Left ventricle myocardium inferior (tissue), 1 donor: ENCODE measurements at regions of chr1 and their contacts with region 1.

Region 1: GRCh38 chr1:214584805-214585766 is 17.9 kb upstream of the CENPF start:
- DNase-seq: no peak
- H3K4me3 ChIP-seq: no peak overlapping the region
- H3K27ac ChIP-seq: no peak overlapping the region
- H3K4me1 ChIP-seq: no peaks in the 10 kb centered on the region
- H3K27me3 ChIP-seq: no peaks in the 10 kb centered on the region
- CTCF ChIP-seq: peak; percentile 80

Region 2: DNA sequence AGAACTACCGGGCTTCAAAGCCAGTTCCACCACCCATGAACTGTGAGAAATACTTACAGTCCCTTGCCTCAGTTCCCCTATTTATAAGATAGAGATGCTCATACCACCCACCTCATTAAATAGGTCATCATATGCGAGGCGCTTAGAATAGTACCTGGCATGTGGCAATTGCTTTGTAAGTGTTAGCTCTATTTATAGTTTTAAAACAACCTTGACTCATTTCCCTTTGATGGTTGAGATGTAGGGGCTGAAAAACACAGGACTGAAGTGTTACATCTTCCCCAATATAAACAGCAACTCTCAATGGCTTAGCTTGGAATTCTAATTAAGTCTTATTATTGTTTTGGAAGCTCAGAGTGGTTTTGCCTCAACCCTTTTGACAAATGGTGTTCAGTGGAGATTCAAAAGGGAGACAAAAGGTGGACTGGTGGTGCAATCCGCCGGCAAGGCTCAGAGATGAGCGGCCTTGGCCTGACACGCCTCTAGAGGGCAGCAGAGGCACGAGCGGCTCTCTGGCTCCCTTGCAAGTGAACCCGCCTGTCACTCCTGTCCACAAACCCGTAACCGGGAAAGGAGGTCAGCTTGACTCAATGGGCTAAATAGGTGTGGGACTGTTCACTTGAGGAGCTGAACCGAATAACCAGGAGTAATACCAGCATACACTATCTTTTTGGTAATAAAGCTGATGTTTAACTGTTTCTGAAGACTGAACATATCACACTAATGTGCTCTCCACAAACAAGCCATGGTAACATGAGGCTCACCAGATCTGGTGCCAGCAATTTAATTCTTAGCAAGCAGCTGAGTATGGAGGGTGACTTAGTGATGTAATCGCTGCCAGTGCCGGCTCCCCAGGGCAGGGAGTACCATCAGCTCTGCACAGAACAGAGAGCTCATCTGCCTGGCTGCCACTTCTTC is 323.6 kb before region 1 on chr1:
- intact Hi-C with region 1: loop called (anchors 10 kb)
- DNase-seq: peak; percentile 85
- H3K4me3 ChIP-seq: peak overlapping the region; percentile 15
- H3K27ac ChIP-seq: peak overlapping the region; percentile 80
- H3K4me1 ChIP-seq: peaks cover 16% of the 10 kb centered on the region
- H3K27me3 ChIP-seq: peaks cover 36% of the 10 kb centered on the region
- CTCF ChIP-seq: peak; percentile 97

Region 3: GRCh38 chr1:214397497-214397896 is 187.6 kb before region 1 on chr1:
- intact Hi-C with region 1: loop called (anchors 10 kb)
- DNase-seq: no peak
- H3K4me3 ChIP-seq: no peak overlapping the region
- H3K27ac ChIP-seq: no peak overlapping the region
- H3K4me1 ChIP-seq: peaks cover 11% of the 10 kb centered on the region
- H3K27me3 ChIP-seq: no peaks in the 10 kb centered on the region
- CTCF ChIP-seq: no peak

Region 4: GRCh38 chr1:214808845-214809460 is 223.9 kb after region 1 on chr1:
- intact Hi-C with region 1: no loop called
- DNase-seq: no peak
- H3K4me3 ChIP-seq: no peak overlapping the region
- H3K27ac ChIP-seq: no peak overlapping the region
- H3K4me1 ChIP-seq: no peaks in the 10 kb centered on the region
- H3K27me3 ChIP-seq: no peaks in the 10 kb centered on the region
- CTCF ChIP-seq: peak; percentile 17